ENCODE measurements at regions of chr1 and their contacts with region 1.

Region 1: GRCh38 chr1:202571347-202572339 is 138.6 kb downstream of the SYT2 start:
- DNase-seq: no peak
- H3K4me3 ChIP-seq: no peak overlapping the region
- CTCF ChIP-seq: peak; percentile 77

Region 2: DNA sequence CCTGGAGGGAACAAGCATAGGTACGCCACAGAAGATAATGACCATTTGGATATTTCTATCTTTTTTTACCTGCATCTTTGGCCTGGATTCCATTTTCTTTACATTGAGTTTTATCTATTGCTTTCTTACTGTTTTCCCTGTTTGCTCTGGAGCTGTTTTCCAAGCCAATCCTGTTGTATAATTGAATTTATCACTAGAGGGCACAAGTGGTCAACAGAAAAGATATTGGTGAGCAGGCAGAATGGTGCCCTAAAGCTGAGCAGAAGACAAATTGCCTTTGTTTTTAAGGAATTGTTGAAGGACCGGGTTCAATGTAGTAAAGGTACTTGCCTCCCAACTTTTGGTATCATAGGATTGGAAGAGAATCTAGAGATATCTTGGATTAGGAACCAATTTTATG is 70.4 kb before region 1 on chr1:
- CTCF ChIA-PET with region 1: interaction called, 10 read pairs
- POLR2A ChIA-PET with region 1: no interaction called
- DNase-seq: no peak
- H3K4me3 ChIP-seq: no peak overlapping the region
- CTCF ChIP-seq: peak; percentile 10

Region 3: DNA sequence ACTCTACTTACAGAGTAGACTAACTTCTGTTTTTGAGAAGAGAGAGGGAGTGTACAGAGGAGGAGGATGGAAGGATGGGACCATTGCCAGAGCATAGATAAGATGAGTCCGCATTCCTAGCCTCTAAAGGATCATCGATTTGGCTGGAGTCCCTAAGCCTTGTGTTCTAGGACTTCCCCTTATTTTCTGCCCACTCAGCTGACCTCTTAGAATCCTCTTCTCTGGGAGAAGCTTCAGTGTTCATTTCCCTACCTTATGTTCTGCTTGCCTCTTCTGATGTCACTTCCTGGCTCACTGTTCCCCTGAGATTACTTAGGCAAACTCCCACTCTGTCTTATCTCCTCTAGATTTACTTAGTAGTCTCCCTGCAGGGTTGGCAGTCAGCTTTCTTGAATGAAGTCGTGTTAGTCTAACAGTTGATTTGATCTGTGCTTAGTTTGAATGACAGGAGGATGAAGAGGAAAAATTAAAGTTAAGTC is 18.0 kb before region 1 on chr1:
- CTCF ChIA-PET with region 1: interaction called, 16 read pairs
- POLR2A ChIA-PET with region 1: no interaction called
- DNase-seq: no peak
- H3K4me3 ChIP-seq: no peak overlapping the region
- CTCF ChIP-seq: no peak

Region 4: DNA sequence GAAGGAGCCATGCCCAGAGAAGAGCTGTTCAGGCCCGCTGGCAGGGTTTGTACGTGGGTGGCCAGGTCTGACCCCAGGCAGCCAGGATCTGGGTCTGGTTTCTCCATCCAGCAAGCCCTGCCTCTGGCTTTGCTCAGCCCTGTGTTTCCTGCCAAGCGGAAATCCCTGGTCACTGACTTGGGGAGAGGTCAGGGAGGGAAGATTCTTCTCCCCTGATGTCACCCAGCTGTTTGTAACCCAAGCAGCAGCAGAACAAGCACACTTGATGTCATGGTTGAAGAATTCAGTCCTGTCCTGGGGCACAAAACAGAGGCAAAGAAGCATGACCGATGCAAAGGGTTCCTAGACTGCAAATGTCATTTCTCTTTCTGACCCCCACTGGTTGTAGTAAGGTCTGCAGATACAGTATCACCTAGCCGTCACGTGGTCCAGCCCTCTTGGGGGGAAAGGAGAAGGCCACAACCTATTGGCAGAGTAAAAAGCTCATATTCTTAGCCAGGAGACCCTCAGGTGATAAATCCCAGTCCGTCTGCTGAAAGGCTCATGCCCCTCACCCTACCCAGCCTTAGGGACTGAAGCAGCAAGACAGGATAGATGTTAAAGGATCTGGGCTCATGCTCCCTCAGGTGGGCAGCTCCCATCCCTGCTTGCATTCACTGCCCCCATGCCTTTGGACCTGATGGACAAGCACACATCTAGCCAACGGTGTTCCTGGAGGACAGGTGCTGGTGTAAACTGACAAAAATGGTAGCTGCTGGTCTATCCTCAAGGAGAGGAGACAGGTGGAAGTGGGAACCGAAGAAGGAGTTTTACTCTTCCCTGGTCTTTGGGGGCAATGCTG is 17.8 kb after region 1 on chr1:
- CTCF ChIA-PET with region 1: interaction called, 38 read pairs
- POLR2A ChIA-PET with region 1: no interaction called
- DNase-seq: peak; percentile 97
- H3K4me3 ChIP-seq: no peak overlapping the region
- CTCF ChIP-seq: no peak

Measured in AG04449 (cell line).